ENCODE measurements at regions of chr22 and their contacts with region 1.

Region 1: DNA sequence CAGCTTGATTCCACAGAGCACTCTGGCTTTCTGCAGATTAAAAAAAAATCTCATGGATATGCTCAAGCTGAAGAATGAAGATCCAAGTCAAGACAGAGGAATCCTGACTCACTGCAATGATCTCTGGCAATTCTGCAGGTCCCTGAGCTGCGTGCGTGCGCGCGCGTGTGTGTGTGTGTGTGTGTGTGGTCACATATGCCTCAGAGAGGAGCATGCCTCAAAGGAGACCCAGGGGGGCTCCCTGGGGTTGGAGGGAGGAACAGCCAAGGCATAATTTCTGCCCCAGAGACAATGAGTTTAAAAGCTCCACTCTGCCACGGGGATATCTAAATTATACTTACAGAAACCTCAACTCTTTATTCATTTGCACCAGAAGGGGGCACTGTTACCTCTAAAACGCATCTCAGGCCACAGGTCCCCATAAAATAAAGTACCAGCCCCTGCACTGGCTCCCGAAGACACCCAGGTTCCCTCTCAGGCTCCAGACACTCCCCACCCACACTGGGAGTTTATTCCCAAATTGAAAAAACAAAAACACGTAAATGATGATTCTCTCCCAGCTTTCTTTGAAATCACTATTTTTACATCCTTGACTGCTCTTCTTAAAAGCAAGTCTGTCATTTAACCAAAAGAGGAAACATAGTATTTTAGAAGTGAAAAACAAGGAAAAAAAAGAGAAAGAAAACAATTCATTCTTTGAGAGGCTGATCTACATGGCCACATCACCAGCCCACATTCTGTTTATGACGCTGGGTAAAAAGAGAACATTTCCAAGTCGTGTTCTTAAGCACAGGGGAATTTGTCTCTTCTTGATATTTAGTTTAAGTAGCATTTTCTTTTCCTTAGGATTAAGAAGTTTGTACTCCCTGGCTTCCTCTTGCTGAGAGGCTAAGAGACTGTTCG is 401.0 kb downstream of the LARGE1 start:
- DNase-seq: no peak
- H3K4me3 ChIP-seq: no peak overlapping the region
- H3K27ac ChIP-seq: peak overlapping the region in 2 of 4 donors; percentile 18 to 27
- H3K4me1 ChIP-seq: peaks cover 0 to 19% (median 10%) of the 10 kb centered on the region in 4 donors
- H3K27me3 ChIP-seq: no peaks in the 10 kb centered on the region
- CTCF ChIP-seq: peak; percentile 63 to 64 (median 63)
- EP300 ChIP-seq: no peak
- POLR2A ChIP-seq: no peak

Region 2: DNA sequence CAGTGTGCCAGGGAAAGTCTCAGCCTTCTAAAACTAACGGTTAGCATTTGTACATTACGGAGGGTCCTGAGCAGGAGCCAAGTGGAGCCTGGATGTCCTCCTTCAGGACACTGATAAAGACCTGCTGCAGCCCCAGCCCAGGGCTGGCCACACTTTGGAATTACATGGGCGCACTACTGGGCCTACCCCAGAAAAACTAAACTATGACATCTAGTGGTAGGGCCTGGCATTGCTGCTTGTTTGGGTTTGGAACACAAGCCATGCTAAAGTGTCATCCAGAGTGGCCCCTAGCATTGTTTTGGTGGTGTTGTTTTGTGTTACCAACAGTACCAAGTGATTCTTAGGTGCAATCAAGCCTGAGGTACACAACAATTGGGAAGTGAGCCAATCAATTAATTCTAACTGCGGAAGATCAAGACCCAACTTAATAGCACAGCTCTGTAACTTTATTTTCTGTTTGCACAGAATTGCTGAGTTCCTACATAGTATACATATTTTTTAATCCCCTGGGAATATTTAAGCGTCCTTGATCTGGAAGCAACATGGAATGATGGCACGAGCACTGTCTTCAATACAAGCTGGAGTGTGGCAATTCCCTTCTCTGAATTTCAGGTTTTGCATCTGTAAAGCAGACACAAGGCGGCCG is 60.2 kb after region 1 on chr22:
- intact Hi-C with region 1: loop called (anchors 1 kb)
- DNase-seq: peak; percentile 73
- H3K4me3 ChIP-seq: no peak overlapping the region
- H3K27ac ChIP-seq: no peak overlapping the region
- H3K4me1 ChIP-seq: peaks cover 0 to 35% (median 28%) of the 10 kb centered on the region in 4 donors
- H3K27me3 ChIP-seq: no peaks in the 10 kb centered on the region
- CTCF ChIP-seq: peak; percentile 57 to 93 (median 85)
- EP300 ChIP-seq: no peak
- POLR2A ChIP-seq: no peak

Region 3: DNA sequence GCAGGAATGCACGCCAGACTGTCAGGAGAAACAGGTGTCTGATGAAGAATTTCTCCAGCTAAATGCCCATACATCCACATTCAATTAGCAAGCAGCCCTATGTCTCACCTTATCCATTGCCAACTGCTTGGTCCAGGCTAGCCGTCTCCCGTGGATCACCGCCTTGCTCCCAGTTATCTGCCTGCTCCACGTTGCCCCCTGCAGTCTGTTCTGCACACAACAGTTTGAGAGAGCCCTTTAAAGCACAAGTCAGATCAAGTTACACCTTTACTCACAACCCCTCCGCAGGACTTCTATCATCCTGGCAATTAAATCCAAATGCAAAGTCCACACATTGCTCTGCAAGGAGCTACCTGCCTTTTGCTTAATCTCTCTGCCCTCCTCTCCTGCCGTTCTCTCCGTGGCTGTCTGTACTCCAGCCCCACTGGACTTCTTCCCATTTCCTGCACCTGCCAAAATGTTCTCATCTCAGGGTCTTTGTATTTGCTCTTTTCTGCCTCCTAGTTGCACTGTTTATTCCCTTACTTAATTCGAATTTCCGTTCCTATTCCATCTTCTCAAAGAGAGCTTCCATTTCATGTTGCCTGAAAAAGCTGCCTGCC is 586.2 kb after region 1 on chr22:
- intact Hi-C with region 1: loop called (anchors 5 kb)
- DNase-seq: peak; percentile 76
- H3K4me3 ChIP-seq: no peak overlapping the region
- H3K27ac ChIP-seq: no peak overlapping the region
- H3K4me1 ChIP-seq: no peaks in the 10 kb centered on the region
- H3K27me3 ChIP-seq: no peaks in the 10 kb centered on the region
- CTCF ChIP-seq: peak; percentile 53 to 77 (median 65)
- EP300 ChIP-seq: no peak
- POLR2A ChIP-seq: no peak